Heart left ventricle (tissue), 16 donors: ENCODE measurements at regions of chr11 and their contacts with region 1.

Region 1: DNA sequence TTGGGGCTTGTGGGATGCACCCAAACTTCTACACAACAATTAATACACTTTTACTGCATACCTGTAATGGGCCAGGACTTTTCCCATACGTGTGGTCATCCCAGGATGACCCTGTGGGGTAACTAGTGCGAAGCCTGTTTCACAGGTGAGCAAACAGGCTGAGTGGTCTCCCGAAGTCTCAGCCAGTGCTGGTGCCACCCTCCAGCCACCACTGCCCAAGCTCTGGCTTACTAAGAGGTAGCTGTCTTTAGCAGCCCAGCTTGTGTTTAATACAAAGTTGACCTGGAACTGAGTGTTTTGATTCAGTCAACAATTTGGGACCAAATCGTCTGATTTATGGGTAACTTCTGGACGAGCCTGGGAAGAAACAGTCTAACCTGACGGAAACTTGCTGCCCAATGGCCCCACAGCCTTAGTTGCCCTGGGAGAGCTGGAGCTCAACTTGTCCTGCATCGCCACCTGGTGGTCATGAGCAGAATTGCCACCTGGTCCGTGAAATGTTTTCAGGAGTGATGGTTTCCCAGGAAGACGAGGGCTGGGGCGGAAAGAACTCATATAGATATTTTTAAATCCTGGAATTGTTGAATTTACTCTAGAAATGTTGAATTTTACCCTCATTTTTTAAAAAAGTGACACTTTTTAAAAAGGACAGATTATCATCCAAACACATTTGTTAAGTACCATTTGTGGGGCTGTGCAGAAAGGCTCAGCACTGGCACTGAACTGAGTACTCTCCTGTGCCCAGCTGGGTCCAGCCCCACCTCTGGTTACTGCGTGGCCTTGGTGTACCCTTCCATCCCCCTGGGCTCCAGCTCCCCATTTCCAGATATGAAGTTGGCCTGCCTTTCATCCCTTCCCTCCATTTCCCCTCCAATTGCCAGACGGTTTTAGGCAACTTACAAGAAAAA is 95.5 kb upstream of the PARVA start:
- DNase-seq: peak; percentile 78 to 89 (median 81)
- ATAC-seq: peak in 3 of 4 donors; percentile 66 to 75 (median 70)
- H3K4me3 ChIP-seq: no peak overlapping the region
- H3K27ac ChIP-seq: no peak overlapping the region
- H3K4me1 ChIP-seq: peaks cover 0 to 24% (median 9%) of the 10 kb centered on the region in 12 donors
- H3K27me3 ChIP-seq: no peaks in the 10 kb centered on the region
- CTCF ChIP-seq: peak; percentile 92 to 98 (median 96)
- POLR2A ChIP-seq: no peak

Region 2: DNA sequence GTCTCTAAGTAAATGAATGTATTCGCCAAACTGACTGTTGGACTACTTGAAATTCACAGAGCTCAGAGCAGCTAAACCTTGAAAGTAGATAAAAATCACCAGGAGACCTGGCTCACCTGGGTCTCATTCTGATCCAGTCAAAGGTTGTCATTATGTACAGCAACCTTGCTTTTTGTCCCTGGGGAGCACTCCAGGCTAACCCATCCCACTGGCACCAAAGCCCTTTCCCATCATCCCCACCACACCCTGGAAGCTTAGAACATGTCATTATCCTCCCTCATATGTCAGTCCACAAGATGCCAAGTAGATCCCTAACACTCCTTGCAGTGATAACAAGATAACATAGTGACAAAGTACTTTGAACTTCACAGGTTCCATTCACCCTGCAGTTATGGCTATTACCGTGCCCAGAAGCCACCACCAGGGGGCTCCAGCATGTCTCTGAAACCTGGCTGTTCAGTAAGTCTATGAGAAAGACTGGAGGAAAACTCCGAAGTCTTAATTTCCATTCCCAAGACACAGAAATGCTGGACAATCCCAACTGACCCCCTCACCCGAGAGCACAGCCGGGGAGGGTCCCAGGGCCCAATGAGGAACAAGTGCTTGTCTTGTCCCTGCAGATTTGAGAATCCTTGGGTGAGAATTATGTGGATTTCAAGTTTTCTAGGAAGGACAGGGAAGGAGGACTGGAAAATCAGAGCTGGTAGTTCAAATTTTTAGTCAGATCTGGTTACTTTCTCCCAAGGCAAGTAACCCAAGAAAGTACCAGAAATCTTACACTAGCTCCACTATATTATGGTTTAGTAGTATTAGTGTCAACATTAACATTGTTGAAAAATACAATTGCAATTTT is 483.0 kb before region 1 on chr11:
- intact Hi-C with region 1: loop called in 9 of 10 experiments (anchors 5 to 10 kb)
- DNase-seq: peak; percentile 71 to 89 (median 83)
- ATAC-seq: peak; percentile 83 to 93 (median 90)
- H3K4me3 ChIP-seq: no peak overlapping the region
- H3K27ac ChIP-seq: no peak overlapping the region
- H3K4me1 ChIP-seq: peaks cover 0 to 6% (median 0%) of the 10 kb centered on the region in 12 donors
- H3K27me3 ChIP-seq: peaks cover 0 to 3% (median 0%) of the 10 kb centered on the region in 9 donors
- CTCF ChIP-seq: peak; percentile 86 to 98 (median 94)
- POLR2A ChIP-seq: no peak

Region 3: GRCh38 chr11:11923828-11924227 is 358.0 kb before region 1 on chr11:
- intact Hi-C with region 1: loop called in 3 of 10 experiments (anchors 5 to 10 kb)
- DNase-seq: no peak
- ATAC-seq: no peak
- H3K4me3 ChIP-seq: no peak overlapping the region
- H3K27ac ChIP-seq: peak overlapping the region in 1 of 12 donors; percentile 22
- H3K4me1 ChIP-seq: peaks cover 0 to 10% (median 0%) of the 10 kb centered on the region in 12 donors
- H3K27me3 ChIP-seq: no peaks in the 10 kb centered on the region
- CTCF ChIP-seq: no peak
- POLR2A ChIP-seq: no peak

Region 4: GRCh38 chr11:11937957-11938356 is 343.9 kb before region 1 on chr11:
- intact Hi-C with region 1: loop called in 6 of 10 experiments (anchors 5 to 10 kb)
- DNase-seq: no peak
- ATAC-seq: no peak
- H3K4me3 ChIP-seq: no peak overlapping the region
- H3K27ac ChIP-seq: no peak overlapping the region
- H3K4me1 ChIP-seq: peaks cover 0 to 10% (median 0%) of the 10 kb centered on the region in 12 donors
- H3K27me3 ChIP-seq: no peaks in the 10 kb centered on the region
- CTCF ChIP-seq: no peak
- POLR2A ChIP-seq: no peak

Region 5: DNA sequence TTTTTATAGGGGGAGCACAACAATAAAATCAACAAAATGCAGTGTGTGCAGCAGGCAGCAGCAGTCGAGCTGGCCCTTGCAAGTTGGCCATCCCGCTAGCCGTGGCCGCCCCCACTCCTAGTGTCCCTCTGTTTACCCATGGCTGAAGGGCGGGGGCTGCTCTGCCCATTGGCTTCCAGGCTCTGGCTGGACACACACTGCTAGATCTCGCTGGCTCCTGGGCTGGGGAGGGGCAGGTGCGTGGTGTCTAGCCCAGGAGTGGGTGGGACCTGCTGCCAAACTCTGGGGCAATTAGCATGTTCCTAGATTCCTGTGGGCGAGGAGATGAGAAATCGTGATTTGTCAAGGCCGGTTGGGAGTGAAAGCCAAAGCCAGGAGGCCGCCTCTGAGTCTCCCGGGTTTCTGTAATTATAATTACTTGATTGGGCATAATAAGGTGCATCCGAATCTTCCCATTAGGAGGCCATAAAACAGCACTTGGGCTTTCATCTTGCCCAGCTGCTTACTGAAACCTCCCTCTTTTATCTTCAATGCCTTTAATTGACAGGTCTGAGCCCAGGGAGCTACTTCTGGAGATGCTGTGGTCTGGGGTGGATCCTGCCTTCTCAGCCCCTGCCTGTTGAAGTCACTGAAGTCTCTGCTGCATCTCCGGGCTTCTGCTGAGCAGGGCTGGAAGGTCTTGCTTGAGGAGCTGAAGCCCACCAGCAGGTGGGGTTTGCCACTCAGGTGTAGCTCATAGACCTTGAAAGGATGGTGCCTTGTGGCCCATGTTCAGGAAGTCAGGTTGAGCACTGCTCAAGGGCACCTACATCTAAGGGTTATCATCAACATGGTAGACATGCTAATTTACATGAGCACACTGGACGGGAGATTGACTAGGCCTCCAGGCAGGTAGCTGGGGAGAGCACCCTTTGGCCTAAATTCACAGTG is 228.9 kb before region 1 on chr11:
- intact Hi-C with region 1: loop called in 3 of 10 experiments (anchors 1 to 2 kb)
- DNase-seq: no peak
- ATAC-seq: no peak
- H3K4me3 ChIP-seq: no peak overlapping the region
- H3K27ac ChIP-seq: peak overlapping the region in 1 of 12 donors; percentile 21
- H3K4me1 ChIP-seq: peaks cover 0 to 24% (median 10%) of the 10 kb centered on the region in 12 donors
- H3K27me3 ChIP-seq: no peaks in the 10 kb centered on the region
- CTCF ChIP-seq: no peak
- POLR2A ChIP-seq: no peak

Region 6: GRCh38 chr11:12235947-12236743 is 45.7 kb before region 1 on chr11:
- intact Hi-C with region 1: loop called in 5 of 10 experiments (anchors 2 to 5 kb)
- DNase-seq: no peak
- ATAC-seq: peak; percentile 35 to 54 (median 44)
- H3K4me3 ChIP-seq: no peak overlapping the region
- H3K27ac ChIP-seq: peak overlapping the region in 10 of 12 donors; percentile 22 to 82 (median 60)
- H3K4me1 ChIP-seq: peaks cover 0 to 60% (median 30%) of the 10 kb centered on the region in 12 donors
- H3K27me3 ChIP-seq: no peaks in the 10 kb centered on the region
- CTCF ChIP-seq: peak; percentile 54 to 81 (median 73)
- POLR2A ChIP-seq: no peak

Region 7: GRCh38 chr11:12469451-12469850 is 187.6 kb after region 1 on chr11:
- intact Hi-C with region 1: no loop called
- DNase-seq: no peak
- ATAC-seq: peak in 3 of 4 donors; percentile 33 to 45 (median 42)
- H3K4me3 ChIP-seq: peak overlapping the region in 4 of 12 donors; percentile 1 to 43 (median 20)
- H3K27ac ChIP-seq: peak overlapping the region in 7 of 12 donors; percentile 8 to 74 (median 32)
- H3K4me1 ChIP-seq: peaks cover 0 to 53% (median 25%) of the 10 kb centered on the region in 12 donors
- H3K27me3 ChIP-seq: no peaks in the 10 kb centered on the region
- CTCF ChIP-seq: no peak
- POLR2A ChIP-seq: no peak